Head of caudate nucleus (tissue), 42 donors: ENCODE measurements at regions of chr6 and their contacts with region 1.

Region 1: GRCh38 chr6:37783856-37784584 is 35.5 kb upstream of the ZFAND3 start:
- DNase-seq: peak in 40 of 42 donors; percentile 13 to 78 (median 42)

Region 2: DNA sequence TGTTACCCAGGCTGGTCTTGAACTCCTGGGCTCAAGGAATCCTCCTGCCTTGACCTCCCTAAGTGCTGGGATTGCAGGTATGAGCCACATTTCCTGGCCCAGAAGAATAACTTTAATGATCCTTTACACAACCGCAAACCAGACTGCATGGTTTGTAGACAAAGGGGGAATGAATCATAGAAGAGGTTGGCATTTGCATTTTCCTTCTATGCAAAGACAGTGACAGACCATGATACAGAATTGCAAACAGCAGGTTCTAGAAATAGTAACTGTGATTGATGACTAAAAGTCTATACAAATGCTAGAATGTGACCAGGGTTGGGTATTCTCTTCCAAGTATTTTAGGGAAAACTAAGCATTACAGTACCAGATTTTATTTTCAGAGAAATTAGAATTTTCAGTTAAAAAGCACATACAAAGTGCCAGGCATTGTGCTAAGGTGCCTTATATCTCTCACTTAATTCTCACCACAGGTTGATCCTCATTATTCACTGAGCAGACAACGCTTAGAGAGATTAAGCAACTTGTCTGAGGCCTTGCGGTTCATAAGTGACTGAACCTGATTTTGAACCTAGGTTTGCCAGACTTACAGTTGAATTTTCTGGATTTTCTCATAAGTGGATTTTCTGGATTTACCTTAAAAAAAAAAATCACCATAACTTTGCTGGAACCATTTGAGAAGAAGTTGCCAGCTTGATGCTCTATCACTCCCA is 182.1 kb after region 1 on chr6:
- intact Hi-C with region 1: no loop called
- DNase-seq: peak in 1 of 42 donors; percentile 17

Region 3: DNA sequence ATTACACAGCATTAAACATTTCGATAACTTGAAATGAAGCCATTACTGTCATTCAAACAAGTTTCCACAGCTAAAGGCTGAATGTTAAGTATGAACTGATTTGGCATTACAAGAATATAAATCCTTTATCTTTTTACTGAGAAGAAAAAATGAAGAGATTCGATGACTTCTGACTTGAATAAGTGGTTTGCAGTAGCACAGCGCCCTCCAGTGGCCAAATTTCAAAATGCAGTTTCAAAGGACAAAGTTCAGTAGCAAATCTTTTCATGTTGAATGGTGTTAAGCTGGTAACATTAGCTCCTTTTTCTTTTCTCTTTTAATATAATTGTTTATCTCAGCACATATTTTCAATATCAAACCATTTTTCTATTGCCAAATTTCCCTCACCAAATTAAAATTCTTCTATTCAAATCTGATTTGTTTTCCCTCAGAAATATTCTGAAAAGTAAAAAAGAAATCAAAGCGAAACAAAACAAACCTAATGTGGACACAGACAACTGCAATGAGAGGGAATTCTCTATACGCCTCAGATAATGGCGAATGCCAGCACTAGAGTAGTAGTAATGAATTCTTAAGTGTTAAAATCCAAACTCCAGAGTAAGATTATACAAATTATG is 710.0 kb after region 1 on chr6:
- intact Hi-C with region 1: loop called (anchors 10 kb)
- DNase-seq: peak; percentile 23 to 97 (median 88)